Natural killer cell (primary cell): ENCODE measurements at regions of chr19 and their contacts with region 1.

Region 1: GRCh38 chr19:42108527-42109389 is 23.5 kb downstream of the POU2F2 start:
- DNase-seq: peak; percentile 85 to 95
- ATAC-seq: peak; percentile 95 to 100 (median 100)
- H3K4me3 ChIP-seq: no peak overlapping the region
- H3K4me3 Mint-ChIP-seq: no peak overlapping the region
- H3K27ac ChIP-seq: no peak overlapping the region
- H3K27ac Mint-ChIP-seq: peak overlapping the region in 1 of 2 donors; percentile 23
- H3K4me1 ChIP-seq: peaks cover 7% of the 10 kb centered on the region
- H3K4me1 Mint-ChIP-seq: peaks cover 0 to 10% of the 10 kb centered on the region in 2 donors
- H3K27me3 ChIP-seq: no peaks in the 10 kb centered on the region
- H3K27me3 Mint-ChIP-seq: no peaks in the 10 kb centered on the region
- CTCF ChIP-seq: peak; percentile 100

Region 2: GRCh38 chr19:41893899-41894298 is 214.9 kb before region 1 on chr19:
- intact Hi-C with region 1: no loop called
- DNase-seq: peak in 1 of 2 donors; percentile 58
- ATAC-seq: peak; percentile 48 to 70 (median 49)
- H3K4me3 ChIP-seq: no peak overlapping the region
- H3K4me3 Mint-ChIP-seq: peak overlapping the region; percentile 42
- H3K27ac ChIP-seq: peak overlapping the region; percentile 39
- H3K27ac Mint-ChIP-seq: peak overlapping the region; percentile 77 to 92
- H3K4me1 ChIP-seq: peaks cover 89% of the 10 kb centered on the region
- H3K4me1 Mint-ChIP-seq: peaks cover 45 to 75% of the 10 kb centered on the region in 2 donors
- H3K27me3 ChIP-seq: no peaks in the 10 kb centered on the region
- H3K27me3 Mint-ChIP-seq: no peaks in the 10 kb centered on the region
- CTCF ChIP-seq: no peak

Region 3: GRCh38 chr19:42092350-42092749 is 16.4 kb before region 1 on chr19:
- intact Hi-C with region 1: no loop called
- DNase-seq: peak in 1 of 2 donors; percentile 64
- ATAC-seq: peak in 2 of 3 donors; percentile 59
- H3K4me3 ChIP-seq: no peak overlapping the region
- H3K4me3 Mint-ChIP-seq: no peak overlapping the region
- H3K27ac ChIP-seq: no peak overlapping the region
- H3K27ac Mint-ChIP-seq: peak overlapping the region; percentile 43 to 49
- H3K4me1 ChIP-seq: peaks cover 21% of the 10 kb centered on the region
- H3K4me1 Mint-ChIP-seq: peaks cover 12 to 38% of the 10 kb centered on the region in 2 donors
- H3K27me3 ChIP-seq: no peaks in the 10 kb centered on the region
- H3K27me3 Mint-ChIP-seq: peaks cover 0 to 2% of the 10 kb centered on the region in 2 donors
- CTCF ChIP-seq: peak; percentile 18

Region 4: DNA sequence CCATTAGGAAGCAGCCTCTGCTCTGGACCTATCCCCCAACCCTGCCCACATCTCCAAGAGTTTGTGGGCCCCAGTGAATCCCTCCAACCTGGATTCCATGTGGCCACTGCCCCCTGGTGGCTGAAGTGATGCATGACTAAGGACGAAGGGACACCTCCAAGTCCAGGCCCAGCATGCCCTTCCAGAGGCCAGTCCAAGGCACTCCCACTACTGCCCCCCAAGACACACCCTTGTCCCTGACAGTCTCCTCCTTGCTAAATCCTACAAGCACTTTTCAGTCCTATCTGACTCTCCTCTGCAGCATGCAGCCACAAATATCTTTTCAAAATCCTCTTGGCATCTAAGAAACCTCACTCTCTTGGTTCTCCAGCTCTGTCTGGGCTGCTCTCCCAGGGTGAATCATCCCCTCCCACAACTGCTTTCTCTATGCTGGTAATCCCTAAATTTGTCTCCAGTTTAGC is 75.7 kb after region 1 on chr19:
- intact Hi-C with region 1: loop called (anchors 2 kb)
- DNase-seq: peak; percentile 64 to 84
- ATAC-seq: peak; percentile 77 to 79 (median 79)
- H3K4me3 ChIP-seq: no peak overlapping the region
- H3K4me3 Mint-ChIP-seq: peak overlapping the region; percentile 72
- H3K27ac ChIP-seq: peak overlapping the region; percentile 17
- H3K27ac Mint-ChIP-seq: peak overlapping the region; percentile 45 to 75
- H3K4me1 ChIP-seq: peaks cover 32% of the 10 kb centered on the region
- H3K4me1 Mint-ChIP-seq: peaks cover 46 to 48% of the 10 kb centered on the region in 2 donors
- H3K27me3 ChIP-seq: peaks cover 3% of the 10 kb centered on the region
- H3K27me3 Mint-ChIP-seq: peaks cover 0 to 3% of the 10 kb centered on the region in 2 donors
- CTCF ChIP-seq: peak; percentile 87

Region 5: GRCh38 chr19:42295831-42296525 is 187.2 kb after region 1 on chr19:
- intact Hi-C with region 1: loop called (anchors 1 kb)
- DNase-seq: peak; percentile 90 to 91
- ATAC-seq: peak; percentile 90 to 98 (median 90)
- H3K4me3 ChIP-seq: no peak overlapping the region
- H3K4me3 Mint-ChIP-seq: no peak overlapping the region
- H3K27ac ChIP-seq: no peak overlapping the region
- H3K27ac Mint-ChIP-seq: no peak overlapping the region
- H3K4me1 ChIP-seq: no peaks in the 10 kb centered on the region
- H3K4me1 Mint-ChIP-seq: peaks cover 0 to 12% of the 10 kb centered on the region in 2 donors
- H3K27me3 ChIP-seq: no peaks in the 10 kb centered on the region
- H3K27me3 Mint-ChIP-seq: no peaks in the 10 kb centered on the region
- CTCF ChIP-seq: peak; percentile 92

Region 6: GRCh38 chr19:42401365-42402303 is 292.9 kb after region 1 on chr19:
- intact Hi-C with region 1: loop called (anchors 1 kb)
- DNase-seq: peak; percentile 78 to 87
- ATAC-seq: peak; percentile 60 to 80 (median 69)
- H3K4me3 ChIP-seq: peak overlapping the region; percentile 45
- H3K4me3 Mint-ChIP-seq: peak overlapping the region; percentile 89
- H3K27ac ChIP-seq: peak overlapping the region; percentile 33
- H3K27ac Mint-ChIP-seq: peak overlapping the region; percentile 68 to 86
- H3K4me1 ChIP-seq: peaks cover 31% of the 10 kb centered on the region
- H3K4me1 Mint-ChIP-seq: peaks cover 20 to 59% of the 10 kb centered on the region in 2 donors
- H3K27me3 ChIP-seq: no peaks in the 10 kb centered on the region
- H3K27me3 Mint-ChIP-seq: no peaks in the 10 kb centered on the region
- CTCF ChIP-seq: peak; percentile 87

Region 7: DNA sequence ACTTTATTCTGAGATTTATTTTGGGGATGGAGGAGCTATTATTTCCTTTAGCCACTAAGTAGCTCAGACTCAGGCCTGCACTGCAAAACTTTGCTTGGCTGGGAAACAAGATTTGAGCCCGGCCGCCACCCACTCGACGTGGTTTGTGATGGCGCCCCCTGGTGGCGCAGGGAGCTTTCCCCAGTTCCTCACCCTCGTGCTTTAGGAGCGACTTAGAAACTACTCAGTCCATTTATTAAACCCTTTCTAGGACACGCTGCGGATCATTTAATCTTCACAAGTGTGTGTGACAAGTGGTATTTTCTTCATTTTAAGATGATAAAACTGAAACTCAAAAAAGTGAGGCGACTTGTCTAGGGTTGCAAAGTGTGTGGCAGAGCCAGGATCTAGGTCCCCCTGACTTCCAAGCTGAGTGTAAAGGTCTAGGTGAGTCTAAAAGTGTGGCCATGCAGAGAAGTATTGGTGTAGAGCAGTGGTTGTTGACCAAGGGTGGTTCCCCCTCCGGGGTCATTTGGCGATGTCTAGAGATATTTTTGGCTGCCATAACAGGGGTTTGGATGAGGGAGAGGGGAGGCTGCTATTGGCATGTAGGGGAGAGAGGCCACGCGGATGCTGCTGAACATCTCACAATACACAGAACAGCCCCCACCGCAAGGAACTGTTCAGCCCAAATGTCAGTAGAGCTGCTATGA is 331.7 kb after region 1 on chr19:
- intact Hi-C with region 1: loop called (anchors 1 kb)
- DNase-seq: peak; percentile 75 to 90
- ATAC-seq: peak; percentile 55 to 68 (median 59)
- H3K4me3 ChIP-seq: no peak overlapping the region
- H3K4me3 Mint-ChIP-seq: peak overlapping the region; percentile 13
- H3K27ac ChIP-seq: no peak overlapping the region
- H3K27ac Mint-ChIP-seq: peak overlapping the region in 1 of 2 donors; percentile 64
- H3K4me1 ChIP-seq: peaks cover 16% of the 10 kb centered on the region
- H3K4me1 Mint-ChIP-seq: peaks cover 19% of the 10 kb centered on the region in 2 donors
- H3K27me3 ChIP-seq: no peaks in the 10 kb centered on the region
- H3K27me3 Mint-ChIP-seq: peaks cover 0 to 4% of the 10 kb centered on the region in 2 donors
- CTCF ChIP-seq: peak; percentile 96